ENCODE measurements at regions of chr22 and their contacts with region 1.

Region 1: DNA sequence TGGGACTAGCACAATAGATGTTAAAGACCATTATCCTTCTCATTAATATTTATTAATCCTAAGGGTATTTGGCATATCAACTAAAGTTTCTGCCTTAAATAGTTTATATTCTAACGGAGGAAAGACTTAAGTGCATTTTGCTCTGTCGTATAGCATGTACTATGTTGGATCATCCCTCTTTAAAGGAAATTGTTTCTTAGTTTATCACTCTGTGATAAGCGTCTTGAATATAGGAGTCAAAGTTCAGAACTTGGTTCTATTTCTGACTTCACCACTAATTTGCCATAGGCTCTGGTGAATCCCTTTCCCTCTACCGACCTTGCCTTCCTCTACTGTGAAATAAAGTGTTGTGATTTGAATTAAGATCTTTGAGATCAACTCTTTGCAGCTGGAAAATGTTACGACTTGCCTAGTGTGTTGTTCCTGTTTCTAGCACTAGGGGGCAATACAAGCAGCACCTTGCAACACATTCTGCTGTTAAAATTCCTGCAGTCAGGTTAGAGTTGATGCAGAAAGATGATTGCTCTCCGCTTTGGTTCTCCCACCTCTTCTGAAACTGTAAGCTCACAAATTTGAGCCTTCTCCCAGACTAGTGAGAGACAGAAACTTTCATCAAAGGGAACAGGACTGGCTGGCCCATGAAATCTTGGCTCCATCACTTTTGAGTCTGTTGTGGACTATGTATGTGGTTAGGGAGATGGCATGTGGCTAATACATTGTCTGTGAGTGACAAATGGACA is 27.8 kb upstream of the ZNRF3 start:
- DNase-seq: no peak
- H3K4me3 ChIP-seq: no peak overlapping the region
- H3K27ac ChIP-seq: no peak overlapping the region
- H3K4me1 ChIP-seq: peaks cover 0 to 4% (median 0%) of the 10 kb centered on the region in 6 donors
- H3K27me3 ChIP-seq: no peaks in the 10 kb centered on the region
- CTCF ChIP-seq: peak; percentile 74 to 95 (median 90)
- POLR2A ChIP-seq: no peak

Region 2: DNA sequence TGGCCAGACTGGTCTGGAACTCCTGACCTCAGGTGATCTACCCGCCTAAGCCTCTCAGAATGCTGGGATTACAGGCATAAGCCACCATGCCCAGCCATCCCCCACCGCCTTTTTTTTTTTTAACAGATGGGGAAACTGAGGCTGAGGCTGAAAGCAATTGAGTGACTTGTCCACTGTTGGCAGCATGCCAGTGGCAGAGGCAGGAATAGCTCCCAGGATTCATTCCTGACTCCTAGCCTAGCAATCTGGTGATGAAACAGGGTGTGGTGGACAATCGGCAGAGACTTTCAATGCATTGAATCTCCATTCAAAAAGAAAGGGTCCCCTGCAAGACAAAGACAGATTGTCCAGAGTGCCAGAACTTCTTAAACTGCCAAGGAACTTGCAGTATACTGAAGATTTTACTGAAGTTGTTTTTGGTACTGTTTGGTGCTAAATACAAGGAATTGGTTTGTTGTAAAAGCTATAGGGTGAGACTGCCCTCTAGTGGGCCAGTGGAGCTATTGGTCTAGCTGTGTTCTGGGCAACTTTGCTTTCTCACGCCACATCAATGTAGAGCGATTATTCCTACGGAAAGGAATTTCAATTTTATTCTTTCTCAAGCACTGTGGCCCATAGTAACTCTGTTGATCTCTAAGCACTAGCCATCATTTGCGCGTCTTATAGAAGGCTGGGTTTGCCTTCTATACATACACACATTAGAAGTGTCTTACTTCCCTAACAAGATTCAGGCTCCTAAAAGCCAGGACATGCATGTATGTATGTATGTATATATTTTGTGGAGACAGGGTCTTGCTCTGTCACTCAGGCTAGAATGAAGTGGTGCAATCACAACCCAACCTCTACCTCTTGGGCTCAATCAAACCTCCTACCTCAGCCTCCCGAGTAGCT is 185.1 kb after region 1 on chr22:
- intact Hi-C with region 1: loop called (anchors 2 kb)
- DNase-seq: no peak
- H3K4me3 ChIP-seq: no peak overlapping the region
- H3K27ac ChIP-seq: no peak overlapping the region
- H3K4me1 ChIP-seq: peaks cover 0 to 14% (median 8%) of the 10 kb centered on the region in 6 donors
- H3K27me3 ChIP-seq: peaks cover 0 to 4% (median 0%) of the 10 kb centered on the region in 7 donors
- CTCF ChIP-seq: peak; percentile 89 to 97 (median 93)
- POLR2A ChIP-seq: no peak

Region 3: DNA sequence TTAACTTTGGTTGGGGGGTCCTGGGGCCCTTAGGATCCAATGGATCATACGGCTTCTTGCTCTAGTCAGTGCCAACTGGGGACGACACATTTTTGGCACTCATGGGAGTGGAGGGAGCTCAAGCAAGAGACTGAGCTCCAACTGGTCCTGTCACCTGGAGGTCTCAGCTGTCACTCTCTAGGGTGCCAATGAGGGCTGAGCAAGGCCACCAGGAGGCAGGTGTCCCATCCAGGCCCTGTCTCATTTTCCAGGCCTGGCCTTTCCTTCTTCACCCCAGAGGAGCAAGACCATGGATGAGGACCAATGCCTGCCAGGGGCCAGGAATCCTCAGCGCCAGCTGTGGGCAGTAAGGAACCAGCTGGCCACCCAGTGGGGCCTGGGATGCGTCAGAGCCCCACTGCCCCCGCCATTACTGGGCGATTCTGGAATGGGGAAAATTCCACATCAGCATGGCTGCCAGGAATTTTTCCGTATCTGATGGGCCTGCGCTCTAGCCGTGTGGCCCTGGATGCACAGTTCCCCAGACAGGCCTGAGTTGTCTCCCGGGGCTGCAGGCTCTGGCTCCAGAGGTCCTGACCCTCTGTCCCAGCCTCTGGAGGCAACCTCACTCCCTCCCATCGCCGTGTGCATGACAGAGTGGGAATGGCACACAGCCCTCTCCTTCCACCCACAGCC is 1719.6 kb after region 1 on chr22:
- intact Hi-C with region 1: no loop called
- DNase-seq: no peak
- H3K4me3 ChIP-seq: no peak overlapping the region
- H3K27ac ChIP-seq: no peak overlapping the region
- H3K4me1 ChIP-seq: peaks cover 0 to 13% (median 4%) of the 10 kb centered on the region in 6 donors
- H3K27me3 ChIP-seq: peaks cover 0 to 7% (median 0%) of the 10 kb centered on the region in 7 donors
- CTCF ChIP-seq: no peak
- POLR2A ChIP-seq: no peak

Measured in spleen (tissue), 13 donors.